ENCODE measurements at regions of chr18 and their contacts with region 1.

Region 1: DNA sequence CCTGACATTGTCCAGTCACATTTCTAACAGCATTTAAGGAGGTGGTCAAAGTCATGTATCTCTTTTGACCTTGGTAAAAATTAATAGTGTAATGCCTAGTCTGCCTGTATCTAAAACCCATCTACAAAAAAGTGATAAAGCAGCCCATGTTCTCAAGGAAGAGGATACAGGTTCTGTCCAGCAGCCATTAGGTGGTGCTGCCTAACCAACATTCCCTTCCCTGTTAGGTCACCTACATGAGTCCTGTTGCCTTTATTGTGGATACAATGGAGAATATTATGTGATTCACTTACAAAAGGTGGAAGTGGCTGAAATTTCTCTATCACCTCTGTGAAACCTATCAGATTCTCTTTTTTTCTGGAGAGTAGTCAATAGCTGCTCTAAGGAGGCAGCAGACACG is 52.5 kb downstream of the AQP4 start:
- DNase-seq: no peak
- ATAC-seq: no peak

Region 2: DNA sequence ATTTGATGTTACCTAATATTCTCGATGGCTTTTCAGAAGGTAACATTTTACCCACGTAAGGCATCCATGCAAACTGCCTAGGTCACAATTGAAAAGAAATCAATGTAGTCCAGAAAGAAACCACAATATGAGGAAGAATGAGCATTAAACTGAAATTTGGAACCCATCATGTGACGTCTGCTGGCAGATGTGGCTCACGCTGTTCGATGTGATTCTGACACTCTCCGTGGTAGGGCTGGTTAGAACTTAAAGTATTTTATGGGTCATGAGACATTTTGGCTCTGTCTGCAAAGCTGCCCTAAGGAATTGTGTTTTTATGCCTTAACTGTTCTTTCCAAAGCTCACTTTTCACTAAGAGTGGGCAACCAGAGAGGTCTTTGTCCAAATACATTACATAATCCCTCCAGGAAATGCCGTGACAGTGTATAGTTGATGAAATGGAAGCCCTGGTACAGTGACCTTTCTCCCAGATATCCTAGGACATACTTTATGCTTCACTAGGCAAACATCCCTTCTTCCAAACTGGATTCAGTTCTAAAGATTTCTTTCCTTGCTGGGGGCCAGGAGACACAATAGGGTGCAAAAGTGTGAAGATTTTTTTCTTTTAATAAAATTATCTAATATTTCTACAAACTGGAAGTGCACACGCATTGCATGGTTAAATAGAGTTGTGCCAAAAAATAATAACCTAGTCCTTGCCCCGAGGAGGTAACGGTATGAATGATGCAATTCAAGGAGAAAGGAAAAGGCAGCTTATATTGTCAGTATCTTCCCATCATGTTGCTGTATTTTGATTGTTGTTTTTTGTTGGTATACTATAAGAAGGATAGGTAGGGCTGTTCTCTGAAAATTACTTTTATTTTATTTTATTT is 66.5 kb before region 1 on chr18:
- intact Hi-C with region 1: no loop called
- DNase-seq: no peak
- ATAC-seq: peak; percentile 68

Region 3: GRCh38 chr18:27004056-27004843 is 191.2 kb after region 1 on chr18:
- intact Hi-C with region 1: loop called (anchors 5 kb)
- DNase-seq: no peak
- ATAC-seq: no peak

Region 4: DNA sequence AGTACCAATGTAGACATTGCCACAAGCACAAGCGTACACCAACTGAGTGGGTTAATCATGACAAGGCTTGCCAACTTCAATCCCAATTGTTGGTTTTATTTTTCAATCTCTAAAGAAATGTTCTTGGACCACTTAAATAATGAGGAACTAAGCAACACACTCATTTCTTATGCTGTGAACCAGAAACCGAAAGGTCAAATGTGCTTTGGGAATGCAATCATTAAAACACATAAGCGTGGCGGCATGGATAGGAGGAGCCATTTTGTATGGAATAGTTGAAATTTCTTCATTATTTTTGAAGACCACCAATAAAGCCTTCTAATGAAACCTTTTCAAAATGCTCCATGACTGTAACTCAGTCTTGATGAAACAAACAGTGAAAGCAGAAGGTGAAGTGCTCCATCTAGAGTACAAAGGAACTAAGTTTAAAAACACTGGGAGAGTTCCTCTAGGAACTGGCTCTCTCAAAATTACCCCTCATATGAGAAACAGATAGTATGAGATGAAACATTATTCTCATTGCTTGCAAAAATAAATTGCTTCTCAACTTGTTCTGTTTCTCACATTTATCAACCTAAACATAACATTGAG is 485.3 kb after region 1 on chr18:
- intact Hi-C with region 1: loop called (anchors 10 kb)
- DNase-seq: no peak
- ATAC-seq: no peak

Measured in Right ventricle myocardium inferior (tissue), 1 donor.